Heart left ventricle (tissue), 16 donors: ENCODE measurements at regions of chr16 and their contacts with region 1.

Region 1: DNA sequence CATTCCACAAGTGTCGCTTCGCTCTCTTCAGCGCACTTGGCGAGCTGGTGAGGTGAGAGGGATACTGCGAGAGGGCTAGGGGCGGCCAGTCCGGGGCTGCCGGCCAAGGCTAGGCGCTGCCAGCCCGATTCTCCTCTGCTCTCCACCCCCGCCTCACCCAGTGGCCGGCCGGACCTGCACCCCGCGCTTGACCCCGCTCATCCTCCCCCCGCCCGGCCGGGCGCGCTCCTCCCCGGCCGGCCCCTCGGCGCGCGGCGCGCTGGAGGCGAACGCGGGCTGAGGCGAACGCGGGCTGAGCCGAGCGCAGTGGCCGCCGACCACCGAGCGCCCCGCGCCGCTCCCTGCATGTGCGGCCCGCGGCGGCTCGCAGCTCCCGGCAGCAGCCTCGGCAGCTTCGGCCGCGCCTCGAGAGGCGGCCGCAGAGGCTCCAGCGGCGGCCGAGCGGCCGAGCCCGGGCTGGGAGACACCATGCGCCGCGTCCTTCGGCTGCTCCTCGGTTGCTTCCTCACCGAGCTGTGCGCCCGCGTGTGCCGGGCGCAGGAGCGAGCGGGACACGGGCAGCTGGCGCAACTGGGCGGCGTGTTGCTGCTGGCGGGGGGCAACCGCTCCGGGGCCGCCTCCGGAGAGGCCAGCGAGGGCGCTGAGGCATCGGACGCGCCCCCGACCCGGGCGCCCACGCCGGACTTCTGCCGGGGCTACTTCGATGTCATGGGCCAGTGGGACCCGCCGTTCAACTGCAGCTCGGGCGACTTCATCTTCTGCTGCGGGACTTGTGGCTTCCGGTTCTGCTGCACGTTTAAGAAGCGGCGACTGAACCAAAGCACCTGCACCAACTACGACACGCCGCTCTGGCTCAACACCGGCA is at the start of gene SHISA9:
- DNase-seq: no peak
- ATAC-seq: no peak
- H3K4me3 ChIP-seq: peak within 1 kb of the TSS in 10 of 12 donors; percentile 9 to 50 (median 28)
- H3K27ac ChIP-seq: no peak within 1 kb of the TSS
- H3K4me1 ChIP-seq: peaks cover 0 to 38% (median 0%) of the 10 kb centered on the region in 12 donors
- H3K27me3 ChIP-seq: peaks cover 30 to 91% (median 70%) of the 10 kb centered on the region in 9 donors
- CTCF ChIP-seq: no peak
- POLR2A ChIP-seq: no peak
- total RNA-seq, gene SHISA9: 0.09 to 0.83 (median 0.31) TPM in 8 of 9 donors, not detected in the other

Region 2: DNA sequence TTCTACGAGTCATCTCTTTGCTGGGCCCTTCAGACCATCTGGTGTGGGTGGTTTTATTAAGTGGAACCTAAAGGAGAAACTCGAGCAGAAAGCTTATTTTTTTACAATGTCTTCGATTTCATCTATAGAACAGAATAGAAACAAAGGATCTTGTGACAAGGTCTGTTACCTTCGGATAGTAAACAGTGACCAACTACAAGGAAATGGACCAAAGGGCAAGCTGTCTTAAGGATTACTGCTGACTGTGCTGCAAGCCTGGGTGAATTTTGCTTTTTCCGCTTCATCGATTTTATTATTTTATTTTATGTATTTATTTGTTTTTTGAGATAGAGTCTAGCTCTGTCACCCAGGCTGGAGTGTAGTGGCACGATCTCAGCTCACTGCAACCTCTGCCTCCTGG is 669.2 kb after region 1 on chr16:
- intact Hi-C with region 1: loop called in 1 of 10 experiments (anchors 5 kb)
- DNase-seq: no peak
- ATAC-seq: no peak
- H3K4me3 ChIP-seq: no peak overlapping the region
- H3K27ac ChIP-seq: no peak overlapping the region
- H3K4me1 ChIP-seq: no peaks in the 10 kb centered on the region
- H3K27me3 ChIP-seq: peaks cover 0 to 7% (median 0%) of the 10 kb centered on the region in 9 donors
- CTCF ChIP-seq: no peak
- POLR2A ChIP-seq: no peak